Activated T-helper 2 cell treated with anti-CD3 and anti-CD28 coated beads, Interferon-gamma antibody, Interleukin-2, Interleukin-4, amounts not matched to agents 10 μg/mL and 5 μg/mL and 100 μg/mL, durations not matched to agents 14 hours and 24 hours and 36 hours (primary cell): ENCODE measurements at regions of chr17 and their contacts with region 1.

Region 1: GRCh38 chr17:35214631-35215273 is 20.6 kb upstream of the SLC35G3 start:
- DNase-seq: peak; percentile 41
- H3K4me3 Mint-ChIP-seq: peak overlapping the region; percentile 67
- H3K27ac Mint-ChIP-seq: peak overlapping the region; percentile 95
- H3K4me1 Mint-ChIP-seq: peaks cover 79% of the 10 kb centered on the region
- H3K27me3 Mint-ChIP-seq: no peaks in the 10 kb centered on the region

Region 2: GRCh38 chr17:35141681-35142466 is 72.9 kb before region 1 on chr17 and contains the start of gene NLE1:
- intact Hi-C with region 1: loop called (anchors 5 kb)
- DNase-seq: peak; percentile 86
- H3K4me3 Mint-ChIP-seq: peak within 1 kb of the TSS; percentile 82
- H3K27ac Mint-ChIP-seq: peak within 1 kb of the TSS; percentile 69
- H3K4me1 Mint-ChIP-seq: peaks cover 6% of the 10 kb centered on the region
- H3K27me3 Mint-ChIP-seq: no peaks in the 10 kb centered on the region
- total RNA-seq, gene NLE1: 38.8 and 40.6 TPM in 2 replicates

Region 3: GRCh38 chr17:35188111-35188510 is 26.6 kb before region 1 on chr17:
- intact Hi-C with region 1: loop called (anchors 1 kb)
- DNase-seq: no peak
- H3K4me3 Mint-ChIP-seq: peak overlapping the region; percentile 33
- H3K27ac Mint-ChIP-seq: peak overlapping the region; percentile 67
- H3K4me1 Mint-ChIP-seq: peaks cover 45% of the 10 kb centered on the region
- H3K27me3 Mint-ChIP-seq: peaks cover 2% of the 10 kb centered on the region

Region 4: GRCh38 chr17:35486920-35487732 is 272.4 kb after region 1 on chr17:
- intact Hi-C with region 1: loop called (anchors 10 kb)
- DNase-seq: peak; percentile 65
- H3K4me3 Mint-ChIP-seq: peak overlapping the region; percentile 83
- H3K27ac Mint-ChIP-seq: peak overlapping the region; percentile 94
- H3K4me1 Mint-ChIP-seq: peaks cover 49% of the 10 kb centered on the region
- H3K27me3 Mint-ChIP-seq: no peaks in the 10 kb centered on the region